A549 (cell line): ENCODE measurements at regions of chr16 and their contacts with region 1.

Region 1: DNA sequence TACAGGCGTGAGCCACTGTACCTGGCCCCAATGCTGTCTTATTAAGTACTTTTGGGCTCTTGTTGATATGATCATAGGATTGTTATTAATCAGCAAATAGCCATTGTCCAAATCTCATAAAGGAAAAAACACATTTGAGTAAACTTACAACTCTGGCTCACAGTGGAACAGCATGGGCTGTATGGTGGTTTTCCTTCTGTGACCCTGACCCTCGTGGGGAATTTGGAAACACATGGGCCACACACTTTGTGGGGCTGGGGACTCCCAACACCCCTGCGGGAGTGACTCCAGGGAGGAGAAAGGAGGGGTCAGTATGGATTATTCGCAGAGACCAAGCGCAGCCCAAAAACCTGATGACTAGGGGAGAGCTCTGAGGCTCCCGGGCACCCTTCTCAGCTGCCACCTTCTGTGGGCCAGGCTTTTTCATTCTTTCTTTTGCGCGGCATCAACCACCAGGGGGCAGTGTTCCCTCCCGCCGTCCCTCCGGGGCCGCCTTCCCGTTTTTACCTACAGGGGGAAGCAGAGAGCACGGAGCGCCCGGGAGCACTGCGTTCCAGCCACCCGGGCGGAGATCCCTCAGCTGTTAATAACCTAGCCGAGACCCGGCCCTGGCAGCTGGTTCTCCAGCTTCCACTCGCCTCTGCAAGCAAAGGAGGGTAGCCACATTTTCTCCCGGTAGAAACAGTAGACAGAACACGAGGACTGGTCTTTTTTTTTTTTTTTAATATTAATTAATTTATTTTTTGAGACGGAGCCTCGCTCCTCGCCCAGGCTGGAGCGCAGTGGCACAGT is 9.7 kb downstream of the TSNAXIP1 start:
- DNase-seq: peak; percentile 79 to 80
- ATAC-seq: peak; percentile 93 to 94
- H3K4me3 ChIP-seq: no peak overlapping the region
- H3K27ac ChIP-seq: no peak overlapping the region
- H3K4me1 ChIP-seq: no peaks in the 10 kb centered on the region
- CTCF ChIP-seq: peak; percentile 100
- EP300 ChIP-seq: no peak
- POLR2A ChIP-seq: no peak
- RAD21 ChIP-seq: peak; percentile 82 to 84

Region 2: DNA sequence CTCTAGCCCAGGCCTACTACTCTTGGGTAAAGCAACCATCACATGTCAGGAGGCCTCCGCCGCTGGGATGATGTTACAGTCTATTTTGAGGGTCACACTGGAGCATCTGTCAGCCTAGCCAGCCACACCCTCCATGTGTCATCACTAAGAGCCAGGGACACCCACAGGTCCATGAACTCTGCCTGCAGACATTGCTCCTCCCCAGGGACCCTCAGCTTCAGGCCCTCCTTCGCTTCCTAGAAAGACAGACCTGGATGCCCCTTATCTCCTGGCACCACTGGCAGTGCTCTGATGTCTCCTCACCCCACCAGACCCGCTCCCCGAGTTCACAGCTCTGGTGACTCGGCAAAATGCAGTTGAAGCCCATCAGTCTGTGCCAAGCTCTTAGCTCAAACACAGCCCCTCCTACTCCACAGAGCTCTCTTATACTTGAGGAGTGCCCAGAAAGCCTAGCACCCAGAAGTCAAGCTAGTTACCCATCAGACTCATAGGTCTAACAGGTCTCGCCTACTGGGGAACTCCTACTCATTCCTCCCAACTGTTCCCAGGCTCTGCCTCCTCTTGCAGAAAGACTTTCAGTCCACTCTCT is 16.0 kb before region 1 on chr16:
- CTCF ChIA-PET with region 1: interaction called, 45 read pairs
- POLR2A ChIA-PET with region 1: no interaction called
- DNase-seq: no peak
- ATAC-seq: no peak; a peak in 2 of 6 replicates
- H3K4me3 ChIP-seq: no peak overlapping the region
- H3K27ac ChIP-seq: peak overlapping the region in 1 of 2 experiments; percentile 22; a peak in 1 of 6 replicates
- H3K4me1 ChIP-seq: peaks cover 13% of the 10 kb centered on the region
- CTCF ChIP-seq: no peak
- EP300 ChIP-seq: no peak
- POLR2A ChIP-seq: no peak
- RAD21 ChIP-seq: no peak

Region 3: DNA sequence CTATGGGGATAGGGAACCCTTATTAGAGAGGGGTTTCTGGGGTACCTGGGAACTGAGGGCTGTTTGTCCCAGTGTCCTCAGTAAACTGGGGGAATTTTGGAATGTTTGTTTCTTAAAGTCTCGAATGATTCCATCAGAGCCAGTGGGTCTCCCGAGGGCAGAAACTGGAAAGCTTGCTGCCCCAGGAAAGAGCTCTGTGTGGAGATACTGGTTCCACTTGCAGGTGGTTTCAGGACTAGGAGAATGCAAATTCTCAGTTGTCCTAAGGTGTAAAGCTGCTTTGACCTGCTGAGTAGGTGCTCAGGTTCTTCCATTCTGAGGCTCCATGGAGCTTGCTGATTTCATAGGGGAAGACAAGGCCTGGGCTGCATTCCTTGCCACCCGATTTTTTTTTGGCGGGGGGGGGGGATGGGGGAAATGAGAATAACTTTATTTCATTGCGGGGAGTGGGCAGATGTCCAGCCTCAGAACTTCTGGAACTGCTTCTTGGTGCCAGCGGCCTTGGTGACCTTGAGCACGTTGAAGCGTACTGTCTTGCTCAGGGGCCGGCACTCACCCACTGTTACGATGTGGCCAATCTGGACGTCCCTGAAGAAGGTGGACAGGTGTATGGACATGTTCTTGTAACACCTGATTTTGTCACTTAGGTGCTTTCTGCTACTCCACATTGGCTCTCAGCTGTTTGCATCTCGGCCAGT is 39.2 kb after region 1 on chr16:
- CTCF ChIA-PET with region 1: interaction called, 65 read pairs
- POLR2A ChIA-PET with region 1: interaction called, 3 read pairs
- DNase-seq: no peak
- ATAC-seq: no peak
- H3K4me3 ChIP-seq: no peak overlapping the region
- H3K27ac ChIP-seq: no peak overlapping the region
- H3K4me1 ChIP-seq: peaks cover 38% of the 10 kb centered on the region
- CTCF ChIP-seq: no peak
- EP300 ChIP-seq: no peak
- POLR2A ChIP-seq: no peak
- RAD21 ChIP-seq: no peak

Region 4: GRCh38 chr16:67883872-67884261 is 67.4 kb after region 1 on chr16:
- CTCF ChIA-PET with region 1: interaction called, 42 read pairs
- POLR2A ChIA-PET with region 1: no interaction called
- DNase-seq: peak; percentile 59 to 92
- ATAC-seq: peak; percentile 16 to 92; a peak in 5 of 6 replicates
- H3K4me3 ChIP-seq: no peak overlapping the region
- H3K27ac ChIP-seq: no peak overlapping the region
- H3K4me1 ChIP-seq: peaks cover 9% of the 10 kb centered on the region; the same call in 1 of the 3 replicates
- CTCF ChIP-seq: peak; percentile 79
- EP300 ChIP-seq: no peak
- POLR2A ChIP-seq: no peak
- RAD21 ChIP-seq: peak; percentile 67 to 73

Region 5: DNA sequence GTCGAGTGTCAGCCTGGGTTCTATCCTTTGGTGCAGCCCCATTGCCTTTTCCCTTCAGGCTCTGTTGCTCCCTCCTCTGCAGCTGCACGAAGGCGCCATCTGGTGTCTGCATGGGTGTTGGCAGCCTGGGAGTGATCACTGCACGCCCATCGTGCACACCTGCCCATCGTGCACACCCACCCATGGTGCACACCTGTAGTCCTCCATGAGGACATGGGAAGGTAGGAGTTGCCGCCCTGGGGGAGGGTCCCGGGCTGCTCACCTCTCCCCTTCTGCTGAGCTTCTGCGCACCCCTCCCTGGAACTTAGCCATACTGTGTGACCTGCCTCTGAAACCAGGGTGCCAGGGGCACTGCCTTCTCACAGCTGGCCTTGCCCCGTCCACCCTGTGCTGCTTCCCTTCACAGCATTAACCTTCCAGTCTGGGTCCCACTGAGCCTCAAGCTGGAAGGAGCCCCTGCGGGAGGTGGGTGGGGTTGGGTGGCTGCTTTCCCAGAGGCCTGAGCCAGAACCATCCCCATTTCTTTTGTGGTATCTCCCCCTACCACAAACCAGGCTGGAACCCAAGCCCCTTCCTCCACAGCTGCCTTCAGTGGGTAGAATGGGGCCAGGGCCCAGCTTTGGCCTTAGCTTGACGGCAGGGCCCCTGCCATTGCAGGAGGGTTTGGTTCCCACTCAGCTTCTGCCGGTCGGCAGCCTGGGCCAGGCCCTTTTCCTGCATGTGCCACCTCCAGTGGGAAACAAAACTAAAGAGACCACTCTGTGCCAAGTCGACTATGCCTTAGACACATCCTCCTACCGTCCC is 112.3 kb after region 1 on chr16:
- CTCF ChIA-PET with region 1: interaction called, 59 read pairs
- POLR2A ChIA-PET with region 1: no interaction called
- DNase-seq: peak; percentile 66 to 91
- ATAC-seq: peak; percentile 70 to 88
- H3K4me3 ChIP-seq: no peak overlapping the region
- H3K27ac ChIP-seq: no peak overlapping the region
- H3K4me1 ChIP-seq: no peaks in the 10 kb centered on the region
- CTCF ChIP-seq: peak; percentile 87
- EP300 ChIP-seq: no peak
- POLR2A ChIP-seq: no peak
- RAD21 ChIP-seq: peak; percentile 80 to 90

Region 6: GRCh38 chr16:68040507-68041288 is 224.3 kb after region 1 on chr16:
- CTCF ChIA-PET with region 1: interaction called, 14 read pairs
- POLR2A ChIA-PET with region 1: no interaction called
- DNase-seq: peak; percentile 76 to 80
- ATAC-seq: peak; percentile 100
- H3K4me3 ChIP-seq: no peak overlapping the region
- H3K27ac ChIP-seq: no peak overlapping the region
- H3K4me1 ChIP-seq: no peaks in the 10 kb centered on the region
- CTCF ChIP-seq: peak; percentile 74
- EP300 ChIP-seq: no peak
- POLR2A ChIP-seq: no peak
- RAD21 ChIP-seq: peak; percentile 77 to 88

Region 7: DNA sequence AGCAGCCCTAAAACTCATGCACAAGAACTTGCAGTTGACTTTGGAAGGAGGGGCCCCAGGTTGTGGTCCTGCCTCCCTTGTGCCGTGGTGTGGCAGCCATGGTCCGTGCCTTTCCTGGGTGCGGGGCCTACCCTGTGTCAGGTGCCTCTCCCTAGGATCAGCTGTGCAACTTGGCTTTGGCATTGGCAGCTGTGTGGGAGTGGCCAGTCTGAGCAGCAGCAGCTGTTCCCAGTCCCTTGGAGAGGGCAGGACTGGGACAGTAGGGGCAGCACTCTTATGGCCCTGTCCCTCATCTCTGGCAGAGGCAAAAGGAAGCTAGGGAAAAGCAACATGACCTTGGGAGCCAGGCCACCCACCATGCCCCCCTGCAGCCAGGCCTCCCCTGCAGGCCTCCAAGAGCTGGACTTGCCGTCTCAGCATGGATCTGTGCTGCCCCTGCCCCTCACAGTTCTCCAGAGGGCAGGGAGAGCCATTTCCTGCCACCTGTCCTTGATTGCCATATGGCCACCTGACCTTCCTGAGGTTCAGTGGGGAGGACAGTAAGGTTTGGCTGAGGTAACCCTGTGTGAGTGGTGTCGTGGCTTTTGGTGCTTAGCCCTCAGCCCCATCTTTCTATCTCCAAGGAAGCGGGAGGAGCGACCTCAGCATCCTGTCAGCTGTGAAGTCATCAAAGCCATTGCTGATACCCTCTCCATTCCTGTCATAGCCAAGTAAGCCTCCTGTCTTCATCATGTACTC is 253.2 kb after region 1 on chr16:
- CTCF ChIA-PET with region 1: no interaction called
- POLR2A ChIA-PET with region 1: no interaction called
- DNase-seq: no peak
- ATAC-seq: no peak
- H3K4me3 ChIP-seq: no peak overlapping the region
- H3K27ac ChIP-seq: no peak overlapping the region
- H3K4me1 ChIP-seq: peaks cover 11% of the 10 kb centered on the region
- CTCF ChIP-seq: no peak
- EP300 ChIP-seq: no peak
- POLR2A ChIP-seq: no peak
- RAD21 ChIP-seq: no peak

Region 8: DNA sequence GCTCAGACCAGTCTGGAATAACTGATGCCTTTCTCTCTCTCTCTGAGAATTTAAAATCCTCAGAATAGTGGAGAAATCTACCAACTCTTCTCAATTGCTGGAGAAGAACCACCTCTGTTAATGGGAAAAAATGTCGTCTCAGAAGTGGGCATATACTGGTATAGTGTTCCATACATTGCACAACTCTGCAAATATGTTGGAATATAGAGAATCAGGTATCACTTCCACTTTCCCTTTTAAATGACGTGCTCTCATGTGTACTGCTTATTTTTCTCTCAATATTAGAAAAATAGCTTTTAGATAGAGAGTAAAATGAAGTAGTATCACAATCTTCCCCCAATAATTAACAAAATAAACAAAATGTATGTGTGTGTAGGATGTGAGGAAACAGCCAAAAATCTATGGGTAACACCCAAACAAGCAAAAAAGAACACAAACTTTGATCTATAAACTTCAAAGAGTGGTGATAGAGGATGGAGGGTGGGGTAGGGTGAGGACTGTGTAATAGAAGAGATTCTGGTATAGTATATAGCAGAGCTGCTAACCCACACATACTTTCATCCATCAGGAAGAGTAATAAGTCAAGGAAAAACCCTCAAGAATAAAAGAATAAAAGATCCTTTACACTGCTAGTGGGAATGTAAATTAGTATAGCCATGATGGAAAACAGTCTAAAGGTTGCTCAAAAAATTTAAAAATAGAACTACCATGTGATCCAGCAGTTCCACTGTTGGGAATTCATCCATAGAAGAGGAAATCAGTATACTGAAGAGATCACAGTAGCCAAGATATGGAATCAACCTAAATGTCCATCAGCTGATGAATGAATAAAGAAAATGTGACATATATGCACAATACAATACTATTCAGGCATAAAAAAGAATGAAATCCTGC is 315.6 kb after region 1 on chr16:
- CTCF ChIA-PET with region 1: no interaction called
- POLR2A ChIA-PET with region 1: no interaction called
- DNase-seq: no peak
- ATAC-seq: no peak
- H3K4me3 ChIP-seq: no peak overlapping the region
- H3K27ac ChIP-seq: no peak overlapping the region
- H3K4me1 ChIP-seq: peaks cover 13% of the 10 kb centered on the region; the same call in 1 of the 3 replicates
- CTCF ChIP-seq: no peak
- EP300 ChIP-seq: no peak
- POLR2A ChIP-seq: no peak
- RAD21 ChIP-seq: no peak